PC-9 (cell line): ENCODE measurements at regions of chr6 and their contacts with region 1.

Region 1: GRCh38 chr6:31776989-31777666 is at the start of gene VWA7:
- DNase-seq: peak; percentile 76 to 89
- H3K4me3 ChIP-seq: peak within 1 kb of the TSS; percentile 40; the same call in 1 of the 2 replicates
- H3K27ac ChIP-seq: peak within 1 kb of the TSS; percentile 58
- H3K4me1 ChIP-seq: peaks cover 31% of the 10 kb centered on the region
- H3K27me3 ChIP-seq: no peaks in the 10 kb centered on the region
- CTCF ChIP-seq: no peak
- total RNA-seq, gene VWA7: 6.0 and 9.6 TPM in 2 replicates

Region 2: DNA sequence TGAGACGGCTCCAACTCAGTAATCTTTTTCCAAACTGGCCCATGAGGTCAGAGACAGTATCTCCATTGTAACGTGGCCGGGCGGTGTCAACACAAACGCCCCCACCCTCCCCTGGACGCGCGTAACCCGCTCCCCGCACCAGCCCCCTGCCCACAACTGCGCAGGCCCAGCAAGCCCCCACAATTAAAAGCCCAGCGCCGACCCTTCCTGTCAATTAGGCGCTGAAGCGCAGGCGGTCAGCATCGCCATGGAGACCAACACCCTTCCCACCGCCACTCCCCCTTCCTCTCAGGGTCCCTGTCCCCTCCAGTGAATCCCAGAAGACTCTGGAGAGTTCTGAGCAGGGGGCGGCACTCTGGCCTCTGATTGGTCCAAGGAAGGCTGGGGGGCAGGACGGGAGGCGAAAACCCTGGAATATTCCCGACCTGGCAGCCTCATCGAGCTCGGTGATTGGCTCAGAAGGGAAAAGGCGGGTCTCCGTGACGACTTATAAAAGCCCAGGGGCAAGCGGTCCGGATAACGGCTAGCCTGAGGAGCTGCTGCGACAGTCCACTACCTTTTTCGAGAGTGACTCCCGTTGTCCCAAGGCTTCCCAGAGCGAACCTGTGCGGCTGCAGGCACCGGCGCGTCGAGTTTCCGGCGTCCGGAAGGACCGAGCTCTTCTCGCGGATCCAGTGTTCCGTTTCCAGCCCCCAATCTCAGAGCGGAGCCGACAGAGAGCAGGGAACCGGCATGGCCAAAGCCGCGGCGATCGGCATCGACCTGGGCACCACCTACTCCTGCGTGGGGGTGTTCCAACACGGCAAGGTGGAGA is 38.1 kb after region 1 on chr6 and contains the starts of genes HSPA1A and HSPA1L:
- CTCF ChIA-PET with region 1: no interaction called
- POLR2A ChIA-PET with region 1: no interaction called
- intact Hi-C with region 1: loop called (anchors 2 kb)
- DNase-seq: peak; percentile 94 to 97
- H3K4me3 ChIP-seq: peak within 1 kb of the TSS; percentile 84
- H3K27ac ChIP-seq: peak within 1 kb of the TSS; percentile 92
- H3K4me1 ChIP-seq: peaks cover 22% of the 10 kb centered on the region
- H3K27me3 ChIP-seq: no peaks in the 10 kb centered on the region
- CTCF ChIP-seq: no peak
- total RNA-seq, gene HSPA1A: 378 and 385 TPM in 2 replicates
- total RNA-seq, gene HSPA1L: 2.3 and 2.6 TPM in 2 replicates

Region 3: GRCh38 chr6:31958741-31959739 is 181.9 kb after region 1 on chr6 and contains the starts of genes NELFE and SKIC2:
- CTCF ChIA-PET with region 1: no interaction called
- POLR2A ChIA-PET with region 1: no interaction called
- intact Hi-C with region 1: loop called (anchors 10 kb)
- DNase-seq: peak; percentile 94 to 98
- H3K4me3 ChIP-seq: peak within 1 kb of the TSS; percentile 95
- H3K27ac ChIP-seq: 0 out of 2 replicates have a peak within 1 kb of the TSS, but pooled peaks have one; percentile 40
- H3K4me1 ChIP-seq: peaks cover 12% of the 10 kb centered on the region
- H3K27me3 ChIP-seq: no peaks in the 10 kb centered on the region
- CTCF ChIP-seq: no peak
- total RNA-seq, gene NELFE: 43.0 and 50.8 TPM in 2 replicates
- total RNA-seq, gene SKIC2: 67.9 and 86.0 TPM in 2 replicates